CD4-positive, alpha-beta memory T cell (primary cell): ENCODE measurements at regions of chrX and their contacts with region 1.

Region 1: DNA sequence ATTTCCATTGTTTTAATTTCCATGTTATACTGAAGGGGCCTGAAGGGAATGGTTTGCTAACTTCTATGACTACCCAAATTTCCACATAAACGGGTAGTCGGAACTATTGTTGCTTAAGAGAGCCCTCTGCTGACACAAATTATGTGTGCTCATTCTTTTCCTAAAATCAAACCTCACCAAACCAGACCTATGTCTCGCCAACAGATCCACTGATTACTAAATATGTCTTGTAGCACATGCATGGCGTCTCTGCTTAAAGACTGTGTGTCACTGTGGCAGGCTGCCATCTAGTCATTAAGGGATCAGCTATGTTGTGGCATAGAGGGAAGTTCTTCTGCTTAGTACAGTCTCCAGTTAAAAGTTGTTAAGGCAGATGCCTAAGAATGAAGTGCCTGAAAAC is 25.1 kb downstream of the PIR start:
- DNase-seq: no peak
- H3K4me3 ChIP-seq: no peak overlapping the region
- H3K4me3 Mint-ChIP-seq: no peak overlapping the region
- H3K27ac ChIP-seq: no peak overlapping the region
- H3K27ac Mint-ChIP-seq: no peak overlapping the region
- H3K4me1 ChIP-seq: no peaks in the 10 kb centered on the region
- H3K4me1 Mint-ChIP-seq: peaks cover 0 to 1% (median 0%) of the 10 kb centered on the region in 4 donors
- H3K27me3 ChIP-seq: no peaks in the 10 kb centered on the region
- H3K27me3 Mint-ChIP-seq: no peaks in the 10 kb centered on the region

Region 2: DNA sequence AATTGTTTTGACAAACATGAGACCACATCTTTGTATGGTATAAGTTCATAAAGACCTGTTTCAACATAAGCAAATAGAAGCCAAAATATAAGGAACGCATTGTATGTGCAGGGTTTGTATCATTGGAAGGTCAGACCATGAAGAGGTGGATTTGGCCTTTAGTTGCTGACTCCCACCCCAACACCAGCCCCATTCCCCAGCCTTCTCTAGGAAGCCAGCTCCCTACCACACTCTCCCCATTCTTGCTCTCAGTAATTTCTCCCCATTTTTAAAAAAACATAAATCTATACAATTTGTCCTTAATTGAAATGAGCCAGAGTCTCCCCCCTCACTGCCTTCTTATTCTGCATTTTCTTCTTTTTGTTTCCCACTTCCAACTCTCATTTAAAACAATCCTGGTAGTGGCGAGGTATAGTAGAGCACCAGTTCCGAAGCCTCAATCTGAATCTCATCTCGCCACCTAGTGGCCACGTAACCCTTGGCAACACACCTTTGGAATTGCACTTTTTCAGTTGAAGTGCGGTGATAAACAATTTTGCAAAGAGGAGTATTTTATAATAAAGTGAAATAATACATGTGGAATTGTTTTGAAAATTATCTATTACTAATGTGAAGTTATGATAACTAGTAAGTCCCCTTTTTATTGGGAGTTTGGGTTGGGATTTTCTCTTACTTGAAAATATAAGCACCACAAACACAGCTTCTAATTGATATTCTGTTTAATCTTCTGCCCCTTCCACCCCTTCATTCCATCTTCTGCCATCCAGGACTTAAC is 324.8 kb before region 1 on chrX:
- CTCF ChIA-PET with region 1: no interaction called
- POLR2A ChIA-PET with region 1: no interaction called
- intact Hi-C with region 1: no loop called
- DNase-seq: peak; percentile 31 to 50 (median 37)
- H3K4me3 ChIP-seq: no peak overlapping the region
- H3K4me3 Mint-ChIP-seq: peak overlapping the region in 6 of 8 donors; percentile 13 to 74 (median 32)
- H3K27ac ChIP-seq: no peak overlapping the region
- H3K27ac Mint-ChIP-seq: peak overlapping the region in 4 of 7 donors; percentile 11 to 80 (median 66)
- H3K4me1 ChIP-seq: peaks cover 11% of the 10 kb centered on the region
- H3K4me1 Mint-ChIP-seq: peaks cover 12 to 17% (median 15%) of the 10 kb centered on the region in 4 donors
- H3K27me3 ChIP-seq: no peaks in the 10 kb centered on the region
- H3K27me3 Mint-ChIP-seq: no peaks in the 10 kb centered on the region

Region 3: GRCh38 chrX:15299941-15300851 is 167.8 kb before region 1 on chrX:
- CTCF ChIA-PET with region 1: interaction called, 3 read pairs
- POLR2A ChIA-PET with region 1: no interaction called
- intact Hi-C with region 1: loop called (anchors 2 kb)
- DNase-seq: peak in 2 of 5 donors; percentile 3 to 6
- H3K4me3 ChIP-seq: no peak overlapping the region
- H3K4me3 Mint-ChIP-seq: no peak overlapping the region
- H3K27ac ChIP-seq: no peak overlapping the region
- H3K27ac Mint-ChIP-seq: no peak overlapping the region
- H3K4me1 ChIP-seq: no peaks in the 10 kb centered on the region
- H3K4me1 Mint-ChIP-seq: peaks cover 0 to 11% (median 4%) of the 10 kb centered on the region in 4 donors
- H3K27me3 ChIP-seq: no peaks in the 10 kb centered on the region
- H3K27me3 Mint-ChIP-seq: no peaks in the 10 kb centered on the region

Region 4: DNA sequence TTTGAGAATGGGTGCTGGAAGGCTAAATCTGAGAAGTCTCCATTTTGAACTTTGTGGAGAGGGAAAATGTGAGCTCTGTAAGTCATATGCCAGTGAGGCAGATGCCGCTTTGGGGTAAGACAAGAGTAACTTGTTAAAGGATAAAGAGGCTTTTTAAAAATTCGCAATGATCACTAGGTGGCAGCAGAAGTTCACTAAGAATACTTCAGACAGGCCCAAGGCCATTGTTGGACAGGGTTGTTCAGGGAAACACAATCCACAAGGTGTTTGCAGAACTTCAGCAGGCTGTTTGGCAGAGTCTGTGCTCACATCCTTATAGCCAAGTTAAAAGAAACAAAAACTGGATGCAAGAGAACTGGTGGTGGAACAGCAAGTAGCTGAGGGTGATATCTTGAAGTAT is 119.0 kb before region 1 on chrX:
- CTCF ChIA-PET with region 1: interaction called, 10 read pairs
- POLR2A ChIA-PET with region 1: no interaction called
- intact Hi-C with region 1: loop called (anchors 5 kb)
- DNase-seq: peak in 4 of 5 donors; percentile 11 to 24 (median 16)
- H3K4me3 ChIP-seq: no peak overlapping the region
- H3K4me3 Mint-ChIP-seq: no peak overlapping the region
- H3K27ac ChIP-seq: no peak overlapping the region
- H3K27ac Mint-ChIP-seq: no peak overlapping the region
- H3K4me1 ChIP-seq: no peaks in the 10 kb centered on the region
- H3K4me1 Mint-ChIP-seq: no peaks in the 10 kb centered on the region
- H3K27me3 ChIP-seq: no peaks in the 10 kb centered on the region
- H3K27me3 Mint-ChIP-seq: peaks cover 3% of the 10 kb centered on the region in 2 donors

Region 5: DNA sequence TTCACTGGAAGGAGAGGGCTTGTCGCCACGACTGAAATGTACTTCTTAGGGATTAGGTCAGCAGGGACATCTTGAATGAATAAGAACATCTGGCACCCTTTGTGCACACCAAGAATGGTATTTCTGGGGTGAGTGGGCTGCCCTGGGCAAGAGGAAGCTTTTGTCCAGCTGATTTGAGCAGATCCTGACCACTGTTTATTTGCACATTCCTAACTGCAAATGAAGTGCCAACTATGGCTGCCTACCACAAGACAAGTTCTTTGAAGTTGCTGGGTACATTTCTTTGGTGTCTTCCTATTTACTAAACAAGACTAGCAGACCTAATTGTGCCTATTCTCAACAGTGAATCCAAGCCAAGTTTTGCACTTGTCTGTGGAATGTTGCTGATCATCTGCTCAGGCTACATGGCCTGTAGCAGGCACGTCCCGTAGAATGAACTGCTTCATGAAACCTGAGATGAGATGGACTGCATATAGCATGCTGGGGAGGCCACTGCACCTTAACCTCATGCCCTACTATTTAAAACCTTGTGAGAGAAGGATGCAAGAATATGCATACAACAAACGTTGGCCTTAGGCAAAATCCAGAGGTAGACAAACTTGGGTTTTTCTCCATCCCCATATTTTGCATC is 19.9 kb before region 1 on chrX:
- CTCF ChIA-PET with region 1: no interaction called
- POLR2A ChIA-PET with region 1: no interaction called
- intact Hi-C with region 1: no loop called
- DNase-seq: no peak
- H3K4me3 ChIP-seq: no peak overlapping the region
- H3K4me3 Mint-ChIP-seq: no peak overlapping the region
- H3K27ac ChIP-seq: no peak overlapping the region
- H3K27ac Mint-ChIP-seq: no peak overlapping the region
- H3K4me1 ChIP-seq: no peaks in the 10 kb centered on the region
- H3K4me1 Mint-ChIP-seq: no peaks in the 10 kb centered on the region
- H3K27me3 ChIP-seq: no peaks in the 10 kb centered on the region
- H3K27me3 Mint-ChIP-seq: peaks cover 0 to 4% of the 10 kb centered on the region in 2 donors

Region 6: GRCh38 chrX:15702488-15703371 is 234.7 kb after region 1 on chrX:
- CTCF ChIA-PET with region 1: no interaction called
- POLR2A ChIA-PET with region 1: no interaction called
- intact Hi-C with region 1: no loop called
- DNase-seq: no peak
- H3K4me3 ChIP-seq: no peak overlapping the region
- H3K4me3 Mint-ChIP-seq: no peak overlapping the region
- H3K27ac ChIP-seq: no peak overlapping the region
- H3K27ac Mint-ChIP-seq: no peak overlapping the region
- H3K4me1 ChIP-seq: no peaks in the 10 kb centered on the region
- H3K4me1 Mint-ChIP-seq: peaks cover 0 to 4% (median 2%) of the 10 kb centered on the region in 4 donors
- H3K27me3 ChIP-seq: no peaks in the 10 kb centered on the region
- H3K27me3 Mint-ChIP-seq: no peaks in the 10 kb centered on the region